ENCODE measurements at regions of chr2 and their contacts with region 1.

Region 1: DNA sequence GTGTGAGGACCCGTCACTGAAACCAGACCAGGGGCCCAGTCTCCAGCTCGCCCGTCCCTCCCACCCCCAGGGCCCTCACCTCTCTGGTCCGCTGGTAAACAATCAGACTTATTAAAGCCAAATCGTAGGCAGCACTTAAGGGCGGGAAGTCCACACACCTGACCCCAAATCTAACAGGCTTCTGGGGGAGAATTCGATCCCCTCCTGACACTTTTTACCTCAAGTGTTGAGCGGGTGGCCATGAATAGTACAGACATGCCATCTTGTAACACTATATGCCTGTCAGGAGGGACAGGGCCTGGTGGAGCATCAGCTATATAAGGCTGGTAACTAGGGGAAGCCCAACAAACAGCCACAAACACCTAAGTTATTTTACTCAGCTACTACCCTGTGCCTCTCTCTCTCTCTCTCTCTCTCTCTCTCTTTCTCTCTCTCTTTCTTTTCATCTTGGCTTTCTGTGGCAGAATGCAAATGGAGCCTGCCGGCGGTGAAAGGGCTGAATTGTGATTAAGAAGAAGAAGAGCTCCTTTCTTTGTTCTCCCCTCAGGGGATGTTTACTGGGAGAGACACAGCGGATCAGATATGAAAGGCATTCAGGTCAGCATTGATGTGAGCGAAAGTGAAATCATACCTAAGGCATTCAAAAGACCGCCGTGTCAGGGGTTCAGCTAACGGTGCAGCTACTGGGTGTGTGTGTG is 9.5 kb downstream of the ZEB2 start:
- DNase-seq: peak; percentile 89
- ATAC-seq: peak; percentile 27
- H3K4me3 ChIP-seq: peak overlapping the region; percentile 9; the same call in 1 of the 2 replicates
- H3K27ac ChIP-seq: peak overlapping the region; percentile 60; the same call in 1 of the 2 replicates
- H3K4me1 ChIP-seq: peaks cover 32% of the 10 kb centered on the region
- H3K27me3 ChIP-seq: no peaks in the 10 kb centered on the region
- CTCF ChIP-seq: no peak
- POLR2A ChIP-seq: no peak
- RAD21 ChIP-seq: no peak

Region 2: DNA sequence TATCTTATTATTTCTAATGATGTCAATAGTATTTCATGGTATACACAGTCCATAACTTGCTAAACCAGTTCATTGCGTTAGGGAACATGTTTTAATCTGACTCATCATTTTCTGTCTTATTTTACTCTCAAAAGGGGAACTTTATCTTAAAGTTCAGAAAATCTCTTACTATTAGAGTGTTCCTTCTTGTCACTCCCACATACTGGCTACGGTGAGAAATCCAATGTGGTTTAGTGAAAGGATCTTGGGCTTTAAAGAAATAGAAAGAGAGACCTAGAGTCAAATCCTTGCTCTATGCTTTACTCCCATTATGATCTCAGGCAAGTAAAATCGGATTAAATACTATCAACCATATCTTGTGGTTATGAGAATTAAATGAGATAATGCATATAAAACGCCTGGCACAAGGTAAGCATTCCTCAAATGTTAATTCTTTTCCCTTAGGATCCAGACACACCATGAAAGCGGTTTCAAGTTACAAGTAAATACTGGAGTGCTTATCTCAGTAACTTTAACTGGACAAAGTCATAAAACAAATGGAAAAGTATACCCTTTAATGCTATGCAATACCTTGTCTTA is 805.2 kb before region 1 on chr2:
- CTCF ChIA-PET with region 1: no interaction called
- POLR2A ChIA-PET with region 1: interaction called, 3 read pairs
- dilution Hi-C with region 1: no loop called
- in situ Hi-C with region 1: no loop called
- intact Hi-C with region 1: loop called (anchors 1 kb)
- DNase-seq: peak; percentile 76
- ATAC-seq: peak; percentile 48
- H3K4me3 ChIP-seq: no peak overlapping the region
- H3K27ac ChIP-seq: peak overlapping the region; percentile 66; the same call in 1 of the 2 replicates
- H3K4me1 ChIP-seq: peaks cover 8% of the 10 kb centered on the region
- H3K27me3 ChIP-seq: no peaks in the 10 kb centered on the region
- CTCF ChIP-seq: no peak
- POLR2A ChIP-seq: no peak
- RAD21 ChIP-seq: no peak

Region 3: DNA sequence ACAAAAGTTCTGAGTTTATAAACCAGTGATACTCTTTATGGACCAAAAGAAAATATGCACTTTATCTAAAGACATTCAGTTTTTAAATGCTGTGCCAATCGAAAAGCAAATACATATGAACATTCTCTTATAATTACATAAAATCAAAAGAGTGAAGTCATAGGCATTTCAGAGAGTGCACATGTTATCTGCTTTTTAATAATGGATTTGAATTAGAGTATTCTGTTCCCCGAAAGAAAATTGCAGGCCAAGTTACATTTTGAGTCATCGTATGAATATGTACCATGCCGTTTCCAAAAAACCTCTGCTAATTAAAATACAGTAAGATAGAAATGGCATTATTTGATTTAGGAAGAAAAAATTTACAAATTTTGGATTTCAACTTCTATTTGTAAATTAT is 556.3 kb before region 1 on chr2:
- CTCF ChIA-PET with region 1: no interaction called
- POLR2A ChIA-PET with region 1: no interaction called
- dilution Hi-C with region 1: no loop called
- in situ Hi-C with region 1: no loop called
- intact Hi-C with region 1: loop called (anchors 5 kb)
- DNase-seq: peak; percentile 48
- ATAC-seq: no peak
- H3K4me3 ChIP-seq: no peak overlapping the region
- H3K27ac ChIP-seq: no peak overlapping the region
- H3K4me1 ChIP-seq: peaks cover 4% of the 10 kb centered on the region
- H3K27me3 ChIP-seq: no peaks in the 10 kb centered on the region
- CTCF ChIP-seq: no peak
- POLR2A ChIP-seq: no peak
- RAD21 ChIP-seq: no peak

Region 4: GRCh38 chr2:144099746-144100438 is 410.6 kb before region 1 on chr2:
- CTCF ChIA-PET with region 1: no interaction called
- POLR2A ChIA-PET with region 1: no interaction called
- dilution Hi-C with region 1: no loop called
- in situ Hi-C with region 1: no loop called
- intact Hi-C with region 1: loop called (anchors 5 kb)
- DNase-seq: peak; percentile 98
- ATAC-seq: peak; percentile 81
- H3K4me3 ChIP-seq: no peak overlapping the region
- H3K27ac ChIP-seq: peak overlapping the region; percentile 5; the same call in 1 of the 2 replicates
- H3K4me1 ChIP-seq: peaks cover 13% of the 10 kb centered on the region
- H3K27me3 ChIP-seq: no peaks in the 10 kb centered on the region
- CTCF ChIP-seq: peak; percentile 58
- POLR2A ChIP-seq: no peak
- RAD21 ChIP-seq: peak; percentile 47

Region 5: DNA sequence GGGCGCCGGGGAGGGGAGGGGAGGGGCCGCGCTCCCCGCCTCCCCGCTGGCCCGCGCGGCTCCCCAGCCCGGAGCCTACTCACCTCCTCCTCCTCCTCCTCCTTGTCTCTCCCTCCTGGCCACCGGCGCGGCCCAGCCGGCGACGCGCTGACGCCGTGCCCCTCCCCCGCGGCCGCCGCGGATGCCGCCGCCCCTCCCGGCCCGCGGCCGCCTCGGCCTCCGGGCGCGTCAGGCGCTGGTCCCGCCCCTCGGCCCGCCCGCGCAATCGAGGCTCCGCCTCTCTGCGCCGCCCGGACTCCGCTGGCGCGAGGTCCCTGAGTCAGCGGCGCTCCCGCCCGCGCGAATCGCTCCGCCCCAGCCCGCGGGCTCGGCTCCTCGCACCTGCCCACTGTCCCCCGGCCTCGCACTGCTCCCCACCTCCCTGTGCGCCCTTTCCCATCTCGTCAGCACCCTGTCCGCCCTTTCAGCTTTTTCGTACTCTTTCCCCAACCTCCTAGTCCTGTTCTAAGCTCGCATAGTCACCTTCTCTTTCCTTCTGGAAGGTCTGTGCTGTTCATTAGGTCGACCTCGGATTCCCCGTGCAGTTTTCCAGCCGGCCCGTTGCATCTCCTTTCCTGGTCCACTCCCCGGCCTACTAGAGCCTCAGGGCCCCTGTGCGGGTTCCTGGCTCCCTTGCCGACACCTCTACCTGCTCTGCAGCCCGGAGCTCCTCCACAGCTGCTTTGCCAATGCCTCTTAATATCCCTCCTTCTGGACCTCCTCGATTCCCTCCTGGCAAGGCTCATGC is 177.9 kb before region 1 on chr2:
- CTCF ChIA-PET with region 1: no interaction called
- POLR2A ChIA-PET with region 1: no interaction called
- dilution Hi-C with region 1: no loop called
- in situ Hi-C with region 1: loop called (anchors 10 kb)
- intact Hi-C with region 1: loop called (anchors 2 kb)
- DNase-seq: peak; percentile 83
- ATAC-seq: peak; percentile 96
- H3K4me3 ChIP-seq: peak overlapping the region; percentile 87
- H3K27ac ChIP-seq: no peak overlapping the region; the same call in 1 of the 2 replicates
- H3K4me1 ChIP-seq: no peaks in the 10 kb centered on the region
- H3K27me3 ChIP-seq: no peaks in the 10 kb centered on the region
- CTCF ChIP-seq: no peak
- POLR2A ChIP-seq: peak; percentile 63; the same call in 1 of the 2 replicates
- RAD21 ChIP-seq: peak; percentile 2

Region 6: DNA sequence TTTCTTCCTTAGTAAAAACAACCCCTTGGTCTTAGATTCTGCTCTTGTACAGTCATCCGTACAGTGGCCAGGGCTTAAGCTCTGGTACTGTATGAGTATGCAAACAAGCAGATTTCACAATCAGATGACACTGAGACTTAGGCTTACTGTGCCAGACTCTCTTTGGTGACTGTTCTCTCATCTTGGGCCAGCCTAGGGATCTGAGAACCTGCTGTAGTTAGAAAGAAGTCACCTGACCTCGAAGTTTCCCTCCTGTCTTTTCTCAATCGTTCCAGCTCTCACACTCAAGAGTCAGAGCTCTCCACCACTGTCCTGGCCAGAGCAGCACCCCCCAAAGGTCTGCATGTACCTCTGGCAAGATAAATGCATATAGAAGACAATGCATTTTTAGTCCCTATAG is 53.8 kb before region 1 on chr2:
- CTCF ChIA-PET with region 1: no interaction called
- POLR2A ChIA-PET with region 1: no interaction called
- dilution Hi-C with region 1: no loop called
- in situ Hi-C with region 1: no loop called
- intact Hi-C with region 1: loop called (anchors 2 kb)
- DNase-seq: peak; percentile 97
- ATAC-seq: peak; percentile 81
- H3K4me3 ChIP-seq: no peak overlapping the region
- H3K27ac ChIP-seq: no peak overlapping the region
- H3K4me1 ChIP-seq: peaks cover 24% of the 10 kb centered on the region
- H3K27me3 ChIP-seq: no peaks in the 10 kb centered on the region
- CTCF ChIP-seq: no peak
- POLR2A ChIP-seq: no peak
- RAD21 ChIP-seq: 0 out of 2 replicates have a peak, but pooled peaks have one; percentile 16